ENCODE measurements at regions of chr6 and their contacts with region 1.

Region 1: DNA sequence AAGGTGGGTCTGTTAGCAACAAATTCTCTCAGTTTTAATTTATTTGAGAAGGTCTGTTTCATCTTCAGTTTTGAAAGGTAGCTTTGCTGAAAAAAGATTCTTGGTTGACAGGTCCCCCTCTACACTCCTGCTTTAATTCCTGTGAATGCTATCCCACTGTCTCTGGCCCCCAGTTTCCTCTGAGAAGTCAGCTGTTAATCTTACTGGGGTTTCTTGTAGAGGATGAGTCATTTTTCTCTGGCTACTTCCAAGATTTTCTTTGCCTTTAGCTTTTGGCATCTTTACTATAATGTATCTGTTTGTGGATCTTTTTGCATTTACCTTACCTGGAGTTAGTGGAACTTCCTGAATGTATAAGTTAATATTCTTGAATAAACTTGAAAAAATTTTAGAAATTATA is 122.7 kb downstream of the MMS22L start:
- DNase-seq: no peak
- H3K4me3 Mint-ChIP-seq: no peak overlapping the region
- H3K27ac Mint-ChIP-seq: no peak overlapping the region
- H3K4me1 Mint-ChIP-seq: no peaks in the 10 kb centered on the region
- H3K27me3 Mint-ChIP-seq: no peaks in the 10 kb centered on the region
- CTCF ChIP-seq: no peak

Region 2: GRCh38 chr6:98272060-98272459 is 1111.8 kb after region 1 on chr6:
- CTCF ChIA-PET with region 1: interaction called, 13 read pairs
- intact Hi-C with region 1: no loop called
- DNase-seq: no peak
- H3K4me3 Mint-ChIP-seq: no peak overlapping the region
- H3K27ac Mint-ChIP-seq: no peak overlapping the region
- H3K4me1 Mint-ChIP-seq: no peaks in the 10 kb centered on the region
- H3K27me3 Mint-ChIP-seq: no peaks in the 10 kb centered on the region
- CTCF ChIP-seq: no peak

Measured in Calu3 (cell line).